Left cardiac atrium (tissue), 4 donors: ENCODE measurements at regions of chr6 and their contacts with region 1.

Region 1: GRCh38 chr6:83051377-83052172 is 14.1 kb downstream of the UBE3D start:
- DNase-seq: no peak
- ATAC-seq: no peak

Region 2: GRCh38 chr6:82257088-82257772 is 794.3 kb before region 1 on chr6:
- intact Hi-C with region 1: loop called (anchors 1 to 5 kb)
- DNase-seq: no peak
- ATAC-seq: no peak

Region 3: GRCh38 chr6:82795940-82796339 is 255.6 kb before region 1 on chr6:
- intact Hi-C with region 1: no loop called
- DNase-seq: no peak
- ATAC-seq: no peak

Region 4: GRCh38 chr6:82954937-82955577 is 96.5 kb before region 1 on chr6:
- intact Hi-C with region 1: no loop called
- DNase-seq: no peak
- ATAC-seq: no peak

Region 5: DNA sequence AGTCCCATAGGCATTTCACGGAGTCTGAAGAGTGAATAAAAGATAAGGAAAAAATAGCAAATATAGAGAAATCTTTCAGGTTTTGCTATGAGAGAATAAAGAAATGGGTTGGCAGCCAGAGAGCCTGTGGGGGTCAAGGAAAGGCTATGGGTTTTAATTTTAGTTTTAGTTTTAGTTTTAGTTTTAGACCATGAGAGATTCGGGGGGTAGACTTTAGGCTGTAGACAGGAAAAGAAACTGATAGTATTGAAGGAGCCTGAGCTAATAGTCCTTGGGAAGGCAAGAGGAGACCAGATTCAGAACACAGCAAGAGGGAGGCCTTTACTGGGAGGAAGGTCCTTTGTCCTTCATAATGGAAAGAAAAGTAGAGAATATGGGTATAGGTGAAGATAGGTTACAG is 35.2 kb after region 1 on chr6:
- intact Hi-C with region 1: no loop called
- DNase-seq: no peak
- ATAC-seq: no peak

Region 6: GRCh38 chr6:83592770-83593394 is 541.3 kb after region 1 on chr6:
- intact Hi-C with region 1: no loop called
- DNase-seq: no peak
- ATAC-seq: no peak